Activated CD4-positive, alpha-beta T cell treated with anti-CD3 and anti-CD28 coated beads for 36 hours (primary cell): ENCODE measurements at regions of chr5 and their contacts with region 1.

Region 1: GRCh38 chr5:126676195-126676624 is 75.5 kb downstream of the PHAX start:
- DNase-seq: peak; percentile 78
- ATAC-seq: peak; percentile 87
- H3K4me3 Mint-ChIP-seq: no peak overlapping the region
- H3K27ac Mint-ChIP-seq: peak overlapping the region; percentile 63
- H3K4me1 Mint-ChIP-seq: peaks cover 3% of the 10 kb centered on the region
- H3K27me3 Mint-ChIP-seq: no peaks in the 10 kb centered on the region

Region 2: DNA sequence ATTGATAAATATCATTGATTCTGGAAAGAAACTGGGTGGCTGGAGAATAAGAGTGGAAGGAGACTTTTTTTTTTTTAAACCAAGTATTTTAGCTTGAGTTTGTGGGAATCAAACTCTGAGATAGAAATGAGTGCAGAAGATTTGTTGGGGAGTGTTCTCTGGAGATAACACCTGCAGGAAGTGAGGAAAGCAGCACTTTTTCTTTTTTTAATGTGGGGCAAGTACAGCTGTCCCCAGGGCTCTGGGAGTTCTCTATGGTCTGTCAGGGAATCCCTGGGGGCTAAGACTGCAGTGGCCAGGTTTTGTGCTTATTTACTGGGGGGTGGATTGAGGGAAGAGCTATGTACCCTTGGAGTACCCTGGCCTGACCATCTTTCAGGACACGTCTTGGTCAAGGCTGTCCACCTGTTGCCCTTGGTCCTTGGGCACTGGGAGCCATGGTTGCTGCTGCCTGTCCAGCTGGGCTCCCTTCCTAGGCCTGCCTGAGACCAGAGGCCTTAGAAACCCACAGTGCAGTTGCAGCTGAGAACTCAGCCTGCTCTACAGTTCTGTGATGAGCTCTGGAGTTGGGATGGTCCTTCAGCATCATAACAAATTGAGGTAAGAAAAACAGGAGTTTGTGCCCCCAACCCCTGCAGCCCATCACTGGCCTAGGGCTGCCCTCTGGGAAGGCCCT is 10.4 kb after region 1 on chr5:
- CTCF ChIA-PET with region 1: interaction called, 19 read pairs
- POLR2A ChIA-PET with region 1: no interaction called
- intact Hi-C with region 1: no loop called
- DNase-seq: no peak
- ATAC-seq: no peak
- H3K4me3 Mint-ChIP-seq: no peak overlapping the region
- H3K27ac Mint-ChIP-seq: no peak overlapping the region
- H3K4me1 Mint-ChIP-seq: peaks cover 28% of the 10 kb centered on the region
- H3K27me3 Mint-ChIP-seq: no peaks in the 10 kb centered on the region

Region 3: DNA sequence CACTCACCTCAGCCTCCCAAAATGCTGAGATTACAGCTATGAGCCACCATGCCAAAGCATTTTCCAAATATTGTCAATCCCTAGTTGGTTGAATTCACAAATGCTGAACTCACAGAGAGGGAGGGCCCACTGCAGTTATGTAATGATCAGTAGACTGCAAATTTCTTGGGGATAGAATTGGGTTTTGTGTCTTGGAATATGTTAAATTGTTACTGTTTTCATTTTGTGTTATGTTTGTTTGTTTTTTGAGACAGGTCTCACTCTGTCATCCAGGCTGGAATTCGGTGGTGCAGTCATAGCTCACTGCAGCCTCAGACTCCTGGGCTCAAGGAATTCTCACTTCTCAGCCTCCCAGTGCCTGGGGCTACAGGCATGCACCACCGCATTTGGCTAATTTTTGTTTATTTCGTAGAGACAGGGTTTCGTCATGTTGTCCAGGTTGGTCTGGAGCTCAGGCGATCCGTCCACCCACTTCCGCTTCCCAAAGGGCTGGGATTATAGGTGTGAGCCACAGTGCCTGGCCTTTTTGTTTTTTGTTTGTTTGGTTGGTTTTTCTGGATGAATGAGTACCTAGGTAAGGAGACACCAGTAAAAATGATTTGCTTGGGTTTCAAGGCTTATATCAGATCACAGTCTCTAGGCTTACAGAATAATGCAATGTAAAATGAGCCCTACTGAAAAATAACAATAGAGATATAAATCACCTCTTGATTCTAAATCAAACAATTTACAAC is 69.2 kb after region 1 on chr5:
- CTCF ChIA-PET with region 1: no interaction called
- POLR2A ChIA-PET with region 1: no interaction called
- intact Hi-C with region 1: loop called (anchors 1 to 2 kb)
- DNase-seq: no peak
- ATAC-seq: no peak
- H3K4me3 Mint-ChIP-seq: no peak overlapping the region
- H3K27ac Mint-ChIP-seq: no peak overlapping the region
- H3K4me1 Mint-ChIP-seq: peaks cover 34% of the 10 kb centered on the region
- H3K27me3 Mint-ChIP-seq: peaks cover 3% of the 10 kb centered on the region

Region 4: GRCh38 chr5:126801992-126802294 is 125.7 kb after region 1 on chr5:
- CTCF ChIA-PET with region 1: interaction called, 25 read pairs
- POLR2A ChIA-PET with region 1: no interaction called
- intact Hi-C with region 1: no loop called
- DNase-seq: no peak
- ATAC-seq: peak; percentile 42
- H3K4me3 Mint-ChIP-seq: no peak overlapping the region
- H3K27ac Mint-ChIP-seq: no peak overlapping the region
- H3K4me1 Mint-ChIP-seq: peaks cover 46% of the 10 kb centered on the region
- H3K27me3 Mint-ChIP-seq: no peaks in the 10 kb centered on the region

Region 5: DNA sequence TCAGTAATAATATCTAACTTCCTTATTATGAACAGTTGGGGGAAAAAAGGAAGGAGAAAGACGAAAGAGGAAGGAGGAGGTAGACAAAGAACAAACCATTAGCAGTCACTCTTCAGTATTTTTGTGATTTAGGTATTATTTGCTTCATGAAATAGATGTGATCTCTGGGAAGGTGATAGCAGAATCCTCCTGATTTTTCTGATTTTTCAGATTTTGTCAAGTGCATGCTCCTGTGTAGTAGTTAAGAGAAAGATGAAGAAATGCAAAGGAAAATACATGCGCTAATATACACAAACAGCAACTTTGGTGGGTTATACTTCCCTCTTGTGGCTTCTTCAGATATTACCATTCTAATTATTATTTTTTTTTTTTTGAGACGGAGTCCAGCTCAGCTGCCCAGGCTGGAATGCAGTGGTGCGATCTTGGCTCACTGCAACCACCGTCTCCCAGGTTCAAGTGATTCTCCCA is 132.3 kb after region 1 on chr5:
- CTCF ChIA-PET with region 1: interaction called, 14 read pairs
- POLR2A ChIA-PET with region 1: interaction called, 3 read pairs
- intact Hi-C with region 1: loop called in 1 of 2 experiments (anchors 1 kb)
- DNase-seq: no peak
- ATAC-seq: no peak
- H3K4me3 Mint-ChIP-seq: no peak overlapping the region
- H3K27ac Mint-ChIP-seq: no peak overlapping the region
- H3K4me1 Mint-ChIP-seq: peaks cover 51% of the 10 kb centered on the region
- H3K27me3 Mint-ChIP-seq: no peaks in the 10 kb centered on the region

Region 6: DNA sequence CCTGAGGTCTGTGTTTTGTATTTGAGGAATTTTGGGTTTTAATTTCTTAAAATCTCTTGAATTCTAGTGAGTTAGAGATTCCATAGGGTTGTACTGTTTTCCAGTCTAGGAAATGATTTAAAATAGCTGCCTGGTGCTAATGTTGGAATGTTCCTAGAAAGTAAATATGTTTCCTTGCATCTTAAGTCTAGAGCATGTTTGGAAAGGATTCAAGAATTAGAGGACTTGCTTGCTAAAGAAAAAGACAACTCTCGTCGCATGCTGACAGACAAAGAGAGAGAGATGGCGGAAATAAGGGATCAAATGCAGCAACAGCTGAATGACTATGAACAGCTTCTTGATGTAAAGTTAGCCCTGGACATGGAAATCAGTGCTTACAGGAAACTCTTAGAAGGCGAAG is 142.5 kb after region 1 on chr5:
- CTCF ChIA-PET with region 1: interaction called, 16 read pairs
- POLR2A ChIA-PET with region 1: no interaction called
- intact Hi-C with region 1: no loop called
- DNase-seq: no peak
- ATAC-seq: no peak
- H3K4me3 Mint-ChIP-seq: no peak overlapping the region
- H3K27ac Mint-ChIP-seq: no peak overlapping the region
- H3K4me1 Mint-ChIP-seq: peaks cover 7% of the 10 kb centered on the region
- H3K27me3 Mint-ChIP-seq: no peaks in the 10 kb centered on the region